Heart left ventricle (tissue), 16 donors: ENCODE measurements at regions of chr1 and their contacts with region 1.

Region 1: DNA sequence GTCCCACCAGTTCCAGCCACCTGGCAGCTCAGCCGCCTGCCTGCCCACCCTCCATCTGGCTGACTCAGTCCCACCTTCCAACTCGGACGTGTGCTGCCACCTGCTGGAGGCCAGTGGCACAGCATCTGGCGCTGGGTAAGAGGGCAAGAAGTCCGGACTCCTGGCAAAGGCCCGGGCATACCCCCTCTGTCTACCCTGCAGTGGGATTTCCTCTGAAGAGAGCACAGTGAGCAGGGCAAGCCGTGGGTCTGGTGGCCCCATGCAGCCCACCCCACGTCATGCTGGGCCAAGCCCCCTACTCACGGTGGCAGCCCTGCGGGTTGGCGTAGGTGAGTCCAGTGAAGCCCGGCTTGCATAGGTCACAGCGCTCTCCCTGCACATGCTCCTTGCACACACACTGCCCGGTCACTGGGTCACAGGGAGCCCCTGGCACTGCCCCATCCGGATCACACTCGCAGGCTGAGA is 24.5 kb downstream of the LAMB3 start:
- DNase-seq: peak; percentile 78 to 88 (median 81)
- ATAC-seq: peak; percentile 29 to 77 (median 72)
- H3K4me3 ChIP-seq: peak overlapping the region in 2 of 12 donors; percentile 7 to 38
- H3K27ac ChIP-seq: peak overlapping the region in 4 of 12 donors; percentile 4 to 55 (median 38)
- H3K4me1 ChIP-seq: peaks cover 0 to 55% (median 37%) of the 10 kb centered on the region in 12 donors
- H3K27me3 ChIP-seq: no peaks in the 10 kb centered on the region
- CTCF ChIP-seq: peak; percentile 95 to 99 (median 97)
- POLR2A ChIP-seq: no peak

Region 2: GRCh38 chr1:209463441-209463840 is 164.3 kb before region 1 on chr1:
- intact Hi-C with region 1: no loop called
- DNase-seq: no peak
- ATAC-seq: no peak
- H3K4me3 ChIP-seq: no peak overlapping the region
- H3K27ac ChIP-seq: no peak overlapping the region
- H3K4me1 ChIP-seq: no peaks in the 10 kb centered on the region
- H3K27me3 ChIP-seq: no peaks in the 10 kb centered on the region
- CTCF ChIP-seq: no peak
- POLR2A ChIP-seq: no peak

Region 3: DNA sequence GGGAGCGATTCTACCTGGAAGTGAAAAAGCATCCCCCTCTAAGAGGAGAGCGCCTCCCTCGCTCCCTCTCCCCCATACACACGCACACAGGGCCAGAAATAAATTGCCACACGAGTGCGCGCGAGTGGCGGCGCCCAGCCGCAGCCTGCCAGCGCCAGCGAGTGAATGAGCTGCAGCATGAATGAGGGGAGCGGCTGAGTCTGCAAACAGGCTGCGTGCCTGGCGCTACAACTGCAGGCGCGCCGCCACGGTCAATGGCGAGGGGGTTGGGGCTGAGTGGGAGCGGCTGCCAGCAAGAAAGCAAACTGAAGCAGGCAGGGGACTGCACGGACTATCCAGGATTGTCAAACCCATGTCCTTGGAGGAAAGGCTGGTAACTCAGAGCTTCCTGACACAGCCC is 42.1 kb before region 1 on chr1:
- intact Hi-C with region 1: loop called in 5 of 10 experiments (anchors 5 kb)
- DNase-seq: peak; percentile 51 to 83 (median 68)
- ATAC-seq: peak; percentile 78 to 94 (median 91)
- H3K4me3 ChIP-seq: peak overlapping the region in 3 of 12 donors; percentile 1 to 19 (median 6)
- H3K27ac ChIP-seq: no peak overlapping the region
- H3K4me1 ChIP-seq: peaks cover 0 to 16% (median 8%) of the 10 kb centered on the region in 12 donors
- H3K27me3 ChIP-seq: peaks cover 0 to 45% (median 9%) of the 10 kb centered on the region in 9 donors
- CTCF ChIP-seq: peak in 5 of 12 donors; percentile 8 to 39 (median 20)
- POLR2A ChIP-seq: no peak

Region 4: GRCh38 chr1:209601809-209602657 is 25.7 kb before region 1 on chr1:
- intact Hi-C with region 1: loop called in 4 of 10 experiments (anchors 1 to 2 kb)
- DNase-seq: no peak
- ATAC-seq: peak; percentile 49 to 90 (median 85)
- H3K4me3 ChIP-seq: no peak overlapping the region
- H3K27ac ChIP-seq: no peak overlapping the region
- H3K4me1 ChIP-seq: no peaks in the 10 kb centered on the region
- H3K27me3 ChIP-seq: no peaks in the 10 kb centered on the region
- CTCF ChIP-seq: peak; percentile 44 to 73 (median 62)
- POLR2A ChIP-seq: no peak

Region 5: DNA sequence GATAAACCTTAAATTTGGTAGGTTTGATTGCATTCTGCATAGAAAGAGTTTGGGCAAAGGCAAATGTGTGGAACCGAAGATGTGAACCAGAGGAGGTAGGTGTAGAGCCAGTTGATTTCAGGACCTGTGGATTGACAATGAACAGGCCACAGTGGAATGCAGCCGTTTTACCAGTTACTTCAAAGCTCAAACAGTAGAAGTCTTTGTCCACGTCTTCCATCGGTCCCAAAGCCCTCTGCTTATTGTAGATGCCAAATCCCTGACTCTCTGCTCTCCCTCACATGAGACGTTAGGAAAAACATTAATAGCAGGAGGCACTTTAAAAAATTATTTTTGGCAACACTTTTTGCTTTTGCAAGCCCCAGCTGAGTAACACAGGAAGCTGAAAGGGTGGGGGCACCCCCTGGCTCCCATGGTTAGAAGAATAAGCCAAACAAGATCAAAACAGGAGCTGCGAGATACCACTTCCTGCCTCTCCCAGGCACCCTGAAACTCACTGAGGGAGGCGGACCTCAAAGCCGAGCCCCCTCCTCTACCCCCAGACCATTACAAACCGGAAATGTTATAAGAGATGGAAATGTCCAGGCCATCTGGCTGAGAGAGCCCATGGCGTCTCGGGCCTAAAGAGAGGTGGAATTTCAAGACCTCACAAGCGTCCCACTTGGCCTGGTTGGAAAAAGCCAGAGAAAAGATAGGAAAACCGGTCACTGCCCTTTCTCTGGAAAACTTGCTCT is 141.6 kb after region 1 on chr1:
- intact Hi-C with region 1: no loop called
- DNase-seq: peak; percentile 77 to 84 (median 84)
- ATAC-seq: peak; percentile 72 to 91 (median 90)
- H3K4me3 ChIP-seq: peak overlapping the region in 5 of 12 donors; percentile 16 to 59 (median 26)
- H3K27ac ChIP-seq: peak overlapping the region; percentile 56 to 90 (median 77)
- H3K4me1 ChIP-seq: peaks cover 4 to 48% (median 20%) of the 10 kb centered on the region in 12 donors
- H3K27me3 ChIP-seq: no peaks in the 10 kb centered on the region
- CTCF ChIP-seq: peak in 1 of 12 donors; percentile 15
- POLR2A ChIP-seq: no peak